Left lung (tissue), 14 donors: ENCODE measurements at regions of chr2 and their contacts with region 1.

Region 1: DNA sequence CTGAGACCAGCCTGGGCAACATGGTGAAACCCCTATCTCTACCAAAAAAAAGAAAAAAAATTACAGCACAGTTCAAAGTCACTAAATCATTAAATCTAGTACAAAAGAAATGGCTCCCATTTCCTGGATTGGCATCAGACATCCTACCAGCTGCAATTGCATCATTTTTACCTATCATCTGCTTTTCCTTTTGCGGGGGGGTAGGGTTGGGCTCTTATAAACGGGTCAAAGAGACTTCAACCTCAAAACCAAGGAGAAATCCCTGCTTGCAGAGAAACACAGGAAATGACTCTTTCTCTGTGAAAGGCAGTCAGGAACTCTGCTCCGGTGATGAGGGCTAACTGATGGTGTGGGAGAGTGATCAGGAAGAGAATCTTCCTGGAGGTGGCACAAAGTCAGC is 45.3 kb upstream of the RFX8 start:
- DNase-seq: no peak
- ATAC-seq: no peak
- H3K4me3 ChIP-seq: no peak overlapping the region
- H3K27ac ChIP-seq: no peak overlapping the region
- H3K4me1 ChIP-seq: peaks cover 13 to 24% of the 10 kb centered on the region in 2 donors
- H3K27me3 ChIP-seq: no peaks in the 10 kb centered on the region
- CTCF ChIP-seq: no peak

Region 2: GRCh38 chr2:101697124-101698013 is 177.1 kb after region 1 on chr2 and contains the start of gene MAP4K4:
- intact Hi-C with region 1: loop called in 1 of 2 experiments (anchors 10 kb)
- DNase-seq: peak; percentile 82 to 96 (median 89)
- ATAC-seq: peak; percentile 83
- H3K4me3 ChIP-seq: peak within 1 kb of the TSS; percentile 54 to 68
- H3K27ac ChIP-seq: peak within 1 kb of the TSS; percentile 78 to 85
- H3K4me1 ChIP-seq: peaks cover 0 to 47% of the 10 kb centered on the region in 2 donors
- H3K27me3 ChIP-seq: peaks cover 0 to 8% of the 10 kb centered on the region in 2 donors
- CTCF ChIP-seq: peak in 1 of 2 donors; percentile 9
- polyA plus RNA-seq, gene MAP4K4: 115 to 143 (median 134) TPM

Region 3: DNA sequence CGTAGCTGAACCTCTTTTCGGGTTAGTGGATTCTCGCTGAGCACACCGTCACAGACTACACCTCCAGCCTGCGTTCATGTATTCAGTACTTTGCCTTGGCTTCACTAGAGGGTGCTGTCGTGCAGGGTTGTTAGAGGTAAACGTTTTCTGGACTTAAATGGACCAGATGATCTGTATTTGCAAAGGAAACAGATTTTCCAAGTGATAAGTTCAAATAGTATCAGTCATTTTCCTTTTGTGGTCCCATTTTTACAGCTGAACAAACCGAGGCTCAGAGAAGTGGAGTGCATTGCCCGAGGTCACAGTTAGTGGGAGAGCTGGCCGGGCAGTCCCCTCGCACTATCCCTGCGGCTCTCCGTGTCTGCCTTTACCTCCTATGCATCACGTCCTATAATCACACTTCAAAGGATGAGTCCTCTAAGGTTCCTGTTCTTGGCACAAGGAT is 303.1 kb after region 1 on chr2:
- intact Hi-C with region 1: loop called in 1 of 2 experiments (anchors 10 kb)
- DNase-seq: peak in 2 of 4 donors; percentile 38 to 42
- ATAC-seq: peak; percentile 90
- H3K4me3 ChIP-seq: no peak overlapping the region
- H3K27ac ChIP-seq: no peak overlapping the region
- H3K4me1 ChIP-seq: peaks cover 8 to 42% of the 10 kb centered on the region in 2 donors
- H3K27me3 ChIP-seq: no peaks in the 10 kb centered on the region
- CTCF ChIP-seq: peak; percentile 47 to 66